ENCODE measurements at regions of chr1 and their contacts with region 1.

Region 1: DNA sequence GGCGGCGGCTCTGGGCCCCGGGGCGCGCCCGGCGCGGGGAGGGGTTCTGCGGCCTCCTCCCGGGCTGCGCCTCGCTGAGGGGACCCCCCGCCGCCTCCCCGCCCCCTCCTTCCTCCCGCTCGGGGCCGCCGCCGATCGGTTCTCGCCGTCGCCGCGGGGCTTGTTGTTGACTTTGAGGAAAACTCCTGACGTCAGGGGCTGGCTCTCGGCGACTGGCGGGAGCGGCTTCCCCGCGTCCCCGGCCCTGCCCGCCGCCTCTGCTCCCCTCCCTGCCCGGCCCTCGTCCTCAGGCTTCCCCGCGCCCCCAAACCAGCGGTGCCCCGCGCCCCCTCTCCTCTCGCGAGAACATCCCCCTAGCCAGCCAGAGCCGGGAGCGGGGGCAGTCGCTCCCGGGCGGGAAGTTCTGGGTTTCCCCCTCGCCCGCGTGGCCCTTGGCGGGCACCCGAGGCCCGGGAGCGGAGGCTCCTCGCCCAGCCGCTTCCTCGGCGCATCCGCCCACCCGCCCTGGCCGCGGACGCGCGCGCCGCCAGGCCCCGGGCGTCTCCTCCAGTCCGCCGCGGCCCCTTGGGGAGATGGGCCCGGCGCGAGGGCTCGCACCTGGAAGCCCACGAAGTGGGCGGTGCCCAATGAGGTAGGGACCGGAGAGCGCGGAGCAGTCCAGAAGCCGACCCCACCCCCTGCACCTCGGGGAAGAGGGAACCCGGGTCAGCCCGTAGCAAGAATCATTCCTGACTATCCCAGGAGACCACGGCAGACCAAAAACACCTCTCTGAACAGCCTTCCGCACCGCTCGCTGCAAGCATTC is 611 bp upstream of the AKT3 start:
- DNase-seq: peak; percentile 87 to 91 (median 89)
- H3K4me3 ChIP-seq: peak overlapping the region; percentile 63 to 70
- H3K4me3 Mint-ChIP-seq: peak overlapping the region; percentile 90 to 95 (median 94)
- H3K27ac ChIP-seq: peak overlapping the region; percentile 95
- H3K27ac Mint-ChIP-seq: peak overlapping the region; percentile 86 to 98 (median 97)
- H3K4me1 ChIP-seq: peaks cover 38% of the 10 kb centered on the region
- H3K4me1 Mint-ChIP-seq: peaks cover 22 to 39% (median 31%) of the 10 kb centered on the region in 4 donors
- H3K27me3 ChIP-seq: no peaks in the 10 kb centered on the region
- H3K27me3 Mint-ChIP-seq: peaks cover 0 to 2% of the 10 kb centered on the region in 2 donors

Region 2: DNA sequence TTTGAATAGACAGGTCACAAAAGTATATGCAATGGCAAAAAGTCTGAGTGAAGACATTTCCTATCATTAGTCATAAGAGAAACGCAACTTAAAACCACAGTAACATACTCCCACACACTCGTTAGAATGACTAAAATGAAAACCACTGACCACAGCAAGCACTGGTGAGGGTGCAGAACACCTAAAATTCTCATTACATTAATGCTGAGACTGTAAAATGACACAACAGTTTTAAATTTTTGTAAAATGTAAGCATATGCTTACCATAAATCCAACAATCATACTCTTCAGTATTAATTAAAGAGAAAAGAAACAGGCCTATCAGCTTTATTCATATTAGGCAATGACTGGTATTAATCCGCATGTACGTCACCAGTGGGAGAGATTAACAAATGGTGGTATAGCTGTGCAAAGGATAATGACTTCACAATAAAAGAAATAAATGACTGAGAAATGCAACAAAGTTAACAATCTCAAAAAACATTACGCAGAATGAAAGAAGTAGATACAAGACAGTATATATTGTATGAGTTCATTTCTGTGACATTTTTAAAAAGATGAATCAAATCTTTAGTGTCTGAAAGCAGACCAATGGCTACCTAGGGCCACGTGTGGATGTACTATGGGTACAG is 254.1 kb before region 1 on chr1:
- CTCF ChIA-PET with region 1: no interaction called
- POLR2A ChIA-PET with region 1: no interaction called
- intact Hi-C with region 1: loop called (anchors 5 kb)
- DNase-seq: peak; percentile 28 to 67 (median 40)
- H3K4me3 ChIP-seq: no peak overlapping the region
- H3K4me3 Mint-ChIP-seq: peak overlapping the region in 7 of 8 donors; percentile 36 to 80 (median 67)
- H3K27ac ChIP-seq: peak overlapping the region; percentile 1
- H3K27ac Mint-ChIP-seq: peak overlapping the region; percentile 67 to 89 (median 85)
- H3K4me1 ChIP-seq: peaks cover 41% of the 10 kb centered on the region
- H3K4me1 Mint-ChIP-seq: peaks cover 24 to 33% (median 30%) of the 10 kb centered on the region in 4 donors
- H3K27me3 ChIP-seq: no peaks in the 10 kb centered on the region
- H3K27me3 Mint-ChIP-seq: no peaks in the 10 kb centered on the region

Region 3: GRCh38 chr1:243837907-243838535 is 12.6 kb before region 1 on chr1:
- CTCF ChIA-PET with region 1: no interaction called
- POLR2A ChIA-PET with region 1: interaction called, 40 read pairs
- intact Hi-C with region 1: loop called (anchors 1 kb)
- DNase-seq: peak in 4 of 5 donors; percentile 46 to 66 (median 54)
- H3K4me3 ChIP-seq: no peak overlapping the region
- H3K4me3 Mint-ChIP-seq: peak overlapping the region; percentile 5 to 74 (median 67)
- H3K27ac ChIP-seq: peak overlapping the region; percentile 35
- H3K27ac Mint-ChIP-seq: peak overlapping the region; percentile 83 to 91 (median 89)
- H3K4me1 ChIP-seq: peaks cover 50% of the 10 kb centered on the region
- H3K4me1 Mint-ChIP-seq: peaks cover 31 to 70% (median 54%) of the 10 kb centered on the region in 4 donors
- H3K27me3 ChIP-seq: no peaks in the 10 kb centered on the region
- H3K27me3 Mint-ChIP-seq: no peaks in the 10 kb centered on the region

Region 4: GRCh38 chr1:244047621-244048471 is 197.2 kb after region 1 on chr1:
- CTCF ChIA-PET with region 1: no interaction called
- POLR2A ChIA-PET with region 1: interaction called, 30 read pairs
- intact Hi-C with region 1: loop called (anchors 1 kb)
- DNase-seq: peak; percentile 93 to 99 (median 97)
- H3K4me3 ChIP-seq: peak overlapping the region; percentile 77 to 99
- H3K4me3 Mint-ChIP-seq: peak overlapping the region; percentile 84 to 98 (median 95)
- H3K27ac ChIP-seq: peak overlapping the region; percentile 94
- H3K27ac Mint-ChIP-seq: peak overlapping the region; percentile 91 to 100 (median 98)
- H3K4me1 ChIP-seq: peaks cover 47% of the 10 kb centered on the region
- H3K4me1 Mint-ChIP-seq: peaks cover 21 to 28% (median 27%) of the 10 kb centered on the region in 4 donors
- H3K27me3 ChIP-seq: no peaks in the 10 kb centered on the region
- H3K27me3 Mint-ChIP-seq: peaks cover 0 to 2% of the 10 kb centered on the region in 2 donors

Region 5: GRCh38 chr1:244451951-244452795 is 601.5 kb after region 1 on chr1:
- CTCF ChIA-PET with region 1: no interaction called
- POLR2A ChIA-PET with region 1: no interaction called
- intact Hi-C with region 1: loop called (anchors 2 kb)
- DNase-seq: peak; percentile 98 to 99 (median 99)
- H3K4me3 ChIP-seq: peak overlapping the region in 1 of 2 donors; percentile 95
- H3K4me3 Mint-ChIP-seq: peak overlapping the region; percentile 87 to 97 (median 92)
- H3K27ac ChIP-seq: peak overlapping the region; percentile 94
- H3K27ac Mint-ChIP-seq: peak overlapping the region; percentile 87 to 100 (median 95)
- H3K4me1 ChIP-seq: peaks cover 39% of the 10 kb centered on the region
- H3K4me1 Mint-ChIP-seq: peaks cover 31 to 48% (median 35%) of the 10 kb centered on the region in 4 donors
- H3K27me3 ChIP-seq: no peaks in the 10 kb centered on the region
- H3K27me3 Mint-ChIP-seq: no peaks in the 10 kb centered on the region